ENCODE measurements at regions of chr16 and their contacts with region 1.

Region 1: DNA sequence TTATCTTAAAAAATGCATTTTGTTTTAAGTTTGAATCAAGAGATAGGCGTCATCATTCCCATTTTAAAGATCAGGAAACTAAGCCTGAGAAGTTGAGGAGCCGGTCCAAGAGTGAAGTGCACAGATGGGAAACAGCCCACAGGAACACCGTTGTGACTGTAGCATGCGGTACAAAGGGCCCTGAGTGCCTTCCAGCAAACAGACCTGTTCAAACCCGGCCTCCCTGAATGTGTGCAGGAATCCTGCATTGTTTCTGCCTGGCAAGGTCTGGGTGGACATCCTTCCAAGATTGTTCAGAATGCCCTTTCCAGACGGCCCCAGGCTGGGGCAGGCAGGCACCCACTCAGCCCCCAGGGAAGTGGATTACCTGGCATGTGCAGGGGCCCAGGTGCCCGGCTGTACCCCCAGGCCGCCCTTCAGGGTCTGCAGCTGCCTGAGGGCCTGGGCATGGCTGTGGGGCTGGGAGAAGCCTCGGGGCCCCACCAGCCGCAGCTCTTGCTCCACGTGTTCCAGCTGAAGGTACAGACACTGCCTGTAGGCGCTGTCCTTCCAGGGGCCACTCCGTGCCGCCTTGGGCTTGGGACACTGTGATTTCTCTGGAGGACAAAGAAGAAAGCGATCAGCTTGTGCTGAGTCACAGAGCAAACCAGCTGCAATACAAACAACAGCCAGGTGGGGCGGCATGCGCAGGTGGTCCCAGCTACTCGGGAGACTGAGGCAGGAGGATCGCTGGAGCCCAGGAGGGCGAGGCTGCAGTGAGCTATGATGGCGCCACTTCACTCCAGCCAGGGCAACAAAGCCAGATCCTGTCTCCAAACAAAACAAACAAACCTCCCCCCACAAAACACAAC is 45.0 kb upstream of the GCSH start:
- DNase-seq: peak; percentile 33 to 84
- H3K4me3 ChIP-seq: no peak overlapping the region
- H3K27ac ChIP-seq: peak overlapping the region; percentile 43; the same call in 1 of the 2 replicates
- H3K4me1 ChIP-seq: peaks cover 0 to 3% (median 1%) of the 10 kb centered on the region in 4 experiments; a peak in 3 of 7 replicates
- H3K27me3 ChIP-seq: no peaks in the 10 kb centered on the region
- CTCF ChIP-seq: peak; percentile 50 to 74 (median 74)
- EP300 ChIP-seq: no peak
- POLR2A ChIP-seq: no peak
- RAD21 ChIP-seq: peak; percentile 28 to 50; a peak in 3 of 4 replicates

Region 2: GRCh38 chr16:81026429-81026828 is 114.7 kb before region 1 on chr16:
- CTCF ChIA-PET with region 1: no interaction called
- POLR2A ChIA-PET with region 1: no interaction called
- DNase-seq: no peak
- H3K4me3 ChIP-seq: no peak overlapping the region
- H3K27ac ChIP-seq: no peak overlapping the region
- H3K4me1 ChIP-seq: no peaks in the 10 kb centered on the region
- H3K27me3 ChIP-seq: no peaks in the 10 kb centered on the region
- CTCF ChIP-seq: no peak
- EP300 ChIP-seq: no peak
- POLR2A ChIP-seq: no peak
- RAD21 ChIP-seq: no peak

Region 3: GRCh38 chr16:81127051-81127450 is 14.1 kb before region 1 on chr16:
- CTCF ChIA-PET with region 1: interaction called, 15 read pairs
- POLR2A ChIA-PET with region 1: interaction called, 3 read pairs
- DNase-seq: no peak
- H3K4me3 ChIP-seq: no peak overlapping the region
- H3K27ac ChIP-seq: no peak overlapping the region
- H3K4me1 ChIP-seq: no peaks in the 10 kb centered on the region
- H3K27me3 ChIP-seq: no peaks in the 10 kb centered on the region
- CTCF ChIP-seq: no peak
- EP300 ChIP-seq: no peak
- POLR2A ChIP-seq: no peak
- RAD21 ChIP-seq: no peak

Region 4: DNA sequence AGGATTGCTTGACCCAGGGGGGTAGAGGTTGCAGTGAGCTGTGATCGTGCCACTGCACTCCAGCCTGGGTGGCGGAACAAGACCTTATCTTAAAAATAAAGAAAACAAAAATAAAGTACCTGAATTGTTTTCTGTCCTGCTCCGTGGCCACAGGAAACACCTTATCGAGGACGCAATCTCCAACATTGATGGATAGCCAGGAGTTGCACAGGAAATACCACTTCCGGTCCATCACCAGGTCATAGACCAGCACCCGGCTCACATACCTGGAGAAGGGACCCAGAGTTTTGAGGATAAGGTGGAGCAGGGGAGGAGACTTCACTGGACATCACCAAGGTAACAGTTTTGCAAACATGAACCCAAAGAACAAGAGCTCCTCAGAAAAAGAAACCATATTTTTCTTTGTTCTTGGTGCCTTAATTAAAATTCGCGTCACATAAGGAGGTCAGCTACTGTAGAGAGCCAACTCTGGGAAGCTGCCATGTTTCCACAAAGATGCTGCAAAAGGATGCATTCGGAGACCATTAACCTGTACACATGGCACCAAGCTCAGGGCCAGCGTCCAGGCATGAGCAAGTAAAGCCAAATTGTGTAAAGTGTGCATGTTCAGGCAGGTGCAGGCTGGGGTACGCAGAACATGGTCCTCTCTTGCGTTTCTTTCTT is 10.6 kb after region 1 on chr16:
- CTCF ChIA-PET with region 1: interaction called, 24 read pairs
- POLR2A ChIA-PET with region 1: interaction called, 3 read pairs
- DNase-seq: no peak
- H3K4me3 ChIP-seq: no peak overlapping the region
- H3K27ac ChIP-seq: no peak overlapping the region
- H3K4me1 ChIP-seq: no peaks in the 10 kb centered on the region
- H3K27me3 ChIP-seq: no peaks in the 10 kb centered on the region
- CTCF ChIP-seq: no peak
- EP300 ChIP-seq: no peak
- POLR2A ChIP-seq: no peak
- RAD21 ChIP-seq: no peak

Region 5: GRCh38 chr16:81158964-81159363 is 17.8 kb after region 1 on chr16:
- CTCF ChIA-PET with region 1: interaction called, 24 read pairs
- POLR2A ChIA-PET with region 1: no interaction called
- DNase-seq: no peak
- H3K4me3 ChIP-seq: no peak overlapping the region
- H3K27ac ChIP-seq: no peak overlapping the region
- H3K4me1 ChIP-seq: no peaks in the 10 kb centered on the region
- H3K27me3 ChIP-seq: no peaks in the 10 kb centered on the region
- CTCF ChIP-seq: no peak
- EP300 ChIP-seq: no peak
- POLR2A ChIP-seq: no peak
- RAD21 ChIP-seq: no peak

Region 6: DNA sequence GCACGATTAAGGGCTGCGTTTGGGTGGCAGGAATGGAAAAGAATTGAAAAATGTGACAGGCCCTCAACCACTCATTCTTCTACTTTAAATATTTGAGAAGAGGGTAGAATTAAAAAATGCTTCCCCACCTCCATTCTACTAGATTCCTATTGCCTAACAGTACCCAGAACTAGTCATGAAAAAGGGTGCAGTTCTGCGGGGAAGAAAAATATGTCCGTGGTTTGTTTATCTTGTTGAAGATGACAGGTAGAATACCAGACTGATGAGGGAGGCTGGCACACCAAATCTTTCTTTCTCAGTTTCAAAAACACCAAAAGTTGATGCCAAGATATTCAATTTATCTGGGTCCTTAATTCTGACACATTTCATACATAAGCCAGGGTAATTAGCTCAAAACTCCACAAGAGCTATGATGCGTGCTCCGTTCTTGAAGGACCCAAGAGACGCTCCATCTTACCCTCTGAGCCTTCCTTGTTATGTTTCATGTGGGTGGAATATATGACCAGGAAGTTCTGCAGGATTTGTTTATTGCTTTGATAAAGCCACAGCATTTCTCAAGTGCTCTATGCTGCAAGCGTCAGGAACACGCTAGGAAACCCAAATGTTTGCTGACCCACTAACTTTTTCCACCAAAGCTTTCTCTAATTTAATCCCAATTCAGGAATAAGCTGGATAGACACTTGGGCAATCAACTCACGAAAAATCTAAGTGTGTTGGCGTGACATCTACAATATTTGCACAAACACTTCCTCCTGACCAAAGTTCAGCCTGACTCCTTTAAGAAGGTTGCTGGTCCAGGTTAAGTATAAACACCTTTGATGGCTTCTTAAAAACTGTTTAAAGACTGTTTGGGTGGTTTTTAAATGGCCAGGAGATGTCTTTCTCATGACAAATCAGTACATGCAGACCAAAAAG is 153.0 kb after region 1 on chr16:
- CTCF ChIA-PET with region 1: no interaction called
- POLR2A ChIA-PET with region 1: no interaction called
- DNase-seq: no peak
- H3K4me3 ChIP-seq: no peak overlapping the region
- H3K27ac ChIP-seq: no peak overlapping the region
- H3K4me1 ChIP-seq: no peaks in the 10 kb centered on the region
- H3K27me3 ChIP-seq: no peaks in the 10 kb centered on the region; a peak in 2 of 7 replicates
- CTCF ChIP-seq: no peak
- EP300 ChIP-seq: no peak
- POLR2A ChIP-seq: no peak
- RAD21 ChIP-seq: no peak

Measured in H1 (cell line).